ENCODE measurements at regions of chr13 and their contacts with region 1.

Region 1: GRCh38 chr13:110392510-110393240 is 85.6 kb downstream of the COL4A2 start:
- DNase-seq: no peak
- H3K4me3 ChIP-seq: no peak overlapping the region
- H3K27ac ChIP-seq: no peak overlapping the region
- H3K4me1 ChIP-seq: peaks cover 6% of the 10 kb centered on the region
- H3K27me3 ChIP-seq: no peaks in the 10 kb centered on the region
- CTCF ChIP-seq: no peak

Region 2: DNA sequence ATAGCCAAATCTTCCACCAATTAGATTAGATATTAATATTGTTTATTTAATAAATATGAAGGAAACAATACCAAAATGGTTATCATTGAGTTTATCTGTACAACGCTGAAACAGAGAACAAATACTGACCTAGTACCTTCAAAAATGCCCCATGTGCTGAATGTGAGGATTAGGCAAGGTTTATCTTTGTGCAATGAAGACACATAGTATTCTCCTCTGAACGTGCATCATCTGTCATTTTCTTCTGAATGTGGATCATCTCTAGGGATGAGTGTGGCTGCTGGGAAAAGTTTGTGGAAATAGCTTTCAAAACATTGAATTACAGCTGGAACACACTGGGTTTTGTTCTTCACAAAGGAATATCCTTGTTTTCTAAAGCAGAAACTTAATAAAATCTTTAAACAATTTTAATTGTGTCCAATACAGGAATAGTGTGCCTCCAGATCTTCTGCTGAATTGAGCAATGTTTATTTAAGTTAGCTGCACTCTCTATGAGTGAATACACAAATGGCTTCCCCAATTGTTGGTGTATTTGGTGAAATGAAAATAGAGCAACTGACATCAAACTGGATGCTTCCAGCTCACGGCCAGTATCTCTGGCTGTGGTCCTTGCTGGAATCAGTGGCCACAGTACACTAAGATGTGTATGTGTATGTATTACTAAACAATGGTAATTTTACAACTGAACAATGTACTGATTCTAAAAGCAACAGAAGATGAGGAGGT is 92.4 kb before region 1 on chr13:
- CTCF ChIA-PET with region 1: no interaction called
- POLR2A ChIA-PET with region 1: interaction called, 14 read pairs
- intact Hi-C with region 1: no loop called
- DNase-seq: no peak
- H3K4me3 ChIP-seq: no peak overlapping the region
- H3K27ac ChIP-seq: no peak overlapping the region
- H3K4me1 ChIP-seq: peaks cover 11% of the 10 kb centered on the region
- H3K27me3 ChIP-seq: no peaks in the 10 kb centered on the region
- CTCF ChIP-seq: no peak

Measured in A673 (cell line).